Prostate gland (tissue), 2 donors: ENCODE measurements at regions of chr12 and their contacts with region 1.

Region 1: DNA sequence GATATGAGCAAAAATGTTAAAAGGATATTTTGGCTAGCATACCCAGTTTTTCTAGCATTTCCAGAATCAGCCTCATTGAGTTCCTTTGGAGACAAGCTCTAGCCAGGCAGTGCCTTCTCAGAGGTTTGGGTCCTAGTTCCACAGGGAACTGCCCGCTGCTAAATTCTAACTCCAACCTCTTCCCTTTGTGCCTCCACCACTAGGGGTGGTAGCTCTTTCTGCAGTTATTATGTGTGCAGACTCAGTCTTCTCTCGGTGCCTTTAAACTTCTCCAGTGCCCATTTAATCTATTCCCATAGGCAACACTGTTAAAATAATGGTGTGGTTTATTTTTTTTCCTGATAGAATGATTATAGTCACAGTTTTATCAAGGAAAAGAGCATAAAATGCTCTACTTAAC is 21.5 kb upstream of the SLC25A3 start:
- DNase-seq: no peak
- H3K4me3 ChIP-seq: no peak overlapping the region
- H3K27ac ChIP-seq: no peak overlapping the region
- H3K4me1 ChIP-seq: no peaks in the 10 kb centered on the region
- H3K27me3 ChIP-seq: no peaks in the 10 kb centered on the region
- CTCF ChIP-seq: no peak
- POLR2A ChIP-seq: no peak

Region 2: DNA sequence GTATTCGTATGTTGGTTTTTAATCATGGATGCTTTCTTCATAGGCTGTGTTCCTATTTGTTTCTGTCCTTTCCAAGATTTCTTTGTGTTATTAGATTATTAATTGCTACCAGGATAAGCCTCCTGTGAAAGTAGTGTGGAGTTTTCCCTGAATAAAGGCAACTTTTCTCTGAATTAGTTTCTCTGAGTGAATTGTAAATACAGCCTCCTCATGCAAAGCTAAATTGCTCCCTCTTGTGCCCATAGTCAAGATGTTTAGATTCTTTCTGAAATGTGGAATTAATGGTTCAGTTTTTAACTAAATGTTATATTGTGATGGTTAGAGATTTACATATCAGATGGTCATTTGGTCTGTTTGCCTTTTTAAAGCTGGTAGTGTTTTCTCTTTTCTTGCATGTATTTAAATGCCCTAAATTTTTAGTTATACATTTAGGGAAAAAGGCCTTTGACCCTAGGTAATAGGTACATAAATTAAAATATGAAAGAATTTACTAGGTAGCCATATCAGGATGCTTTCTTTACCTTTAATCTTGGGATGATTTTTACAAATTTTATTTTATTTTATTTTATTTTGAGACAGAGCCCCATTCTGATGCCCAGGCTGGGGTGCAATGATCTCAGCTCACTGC is 82.0 kb after region 1 on chr12:
- intact Hi-C with region 1: loop called (anchors 5 kb)
- DNase-seq: no peak
- H3K4me3 ChIP-seq: no peak overlapping the region
- H3K27ac ChIP-seq: no peak overlapping the region
- H3K4me1 ChIP-seq: no peaks in the 10 kb centered on the region
- H3K27me3 ChIP-seq: no peaks in the 10 kb centered on the region
- CTCF ChIP-seq: peak in 3 of 4 experiments; percentile 8 to 56 (median 54)
- POLR2A ChIP-seq: no peak

Region 3: GRCh38 chr12:98788396-98788795 is 216.4 kb after region 1 on chr12:
- intact Hi-C with region 1: no loop called
- DNase-seq: no peak
- H3K4me3 ChIP-seq: no peak overlapping the region
- H3K27ac ChIP-seq: no peak overlapping the region
- H3K4me1 ChIP-seq: no peaks in the 10 kb centered on the region
- H3K27me3 ChIP-seq: no peaks in the 10 kb centered on the region
- CTCF ChIP-seq: no peak
- POLR2A ChIP-seq: no peak